Activated CD4-positive, alpha-beta T cell treated with anti-CD3 and anti-CD28 coated beads for 36 hours (primary cell): ENCODE measurements at regions of chr1 and their contacts with region 1.

Region 1: GRCh38 chr1:30911046-30911954 is 2.7 kb upstream of the SDC3 start:
- DNase-seq: peak; percentile 82
- ATAC-seq: peak; percentile 74
- H3K4me3 Mint-ChIP-seq: no peak overlapping the region
- H3K27ac Mint-ChIP-seq: no peak overlapping the region
- H3K4me1 Mint-ChIP-seq: peaks cover 13% of the 10 kb centered on the region
- H3K27me3 Mint-ChIP-seq: peaks cover 20% of the 10 kb centered on the region

Region 2: DNA sequence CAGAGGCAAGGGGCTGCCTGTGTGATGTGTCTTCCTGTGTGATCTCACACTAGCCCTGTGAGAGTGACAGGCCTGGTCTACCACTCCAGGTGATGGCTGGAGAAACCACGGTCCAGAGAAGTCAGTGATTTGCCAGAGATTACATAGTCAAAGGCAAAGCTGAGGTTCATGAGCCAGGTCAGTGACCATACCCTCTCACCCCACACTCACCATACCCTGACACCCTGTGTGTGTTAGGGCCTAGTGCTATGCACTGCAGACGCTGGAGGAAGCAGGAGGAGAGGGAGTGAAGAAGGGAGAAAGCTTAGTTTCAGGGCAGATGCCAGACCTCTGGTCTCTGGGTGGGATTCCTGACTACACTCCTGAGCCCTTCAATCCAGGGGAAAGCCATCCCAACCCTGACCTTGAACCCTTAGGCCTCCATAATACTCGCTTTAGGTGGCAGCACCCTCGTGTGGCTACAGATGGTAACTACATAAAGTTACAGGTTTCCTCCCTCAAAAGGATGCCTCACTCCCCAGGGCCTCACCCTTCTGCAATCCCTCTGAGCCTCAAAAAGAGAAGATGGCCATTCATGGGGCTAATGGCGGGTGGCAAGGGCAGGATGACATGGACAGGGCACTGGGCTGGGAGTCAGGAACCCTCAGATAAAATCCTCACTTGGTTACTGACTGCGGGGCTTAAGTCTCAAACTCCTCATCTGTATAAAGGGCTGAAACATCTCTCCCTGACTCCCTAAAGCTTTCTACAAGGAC is 18.0 kb after region 1 on chr1:
- CTCF ChIA-PET with region 1: interaction called, 14 read pairs
- POLR2A ChIA-PET with region 1: no interaction called
- intact Hi-C with region 1: no loop called
- DNase-seq: peak; percentile 75
- ATAC-seq: peak; percentile 82
- H3K4me3 Mint-ChIP-seq: no peak overlapping the region
- H3K27ac Mint-ChIP-seq: no peak overlapping the region
- H3K4me1 Mint-ChIP-seq: no peaks in the 10 kb centered on the region
- H3K27me3 Mint-ChIP-seq: no peaks in the 10 kb centered on the region

Region 3: DNA sequence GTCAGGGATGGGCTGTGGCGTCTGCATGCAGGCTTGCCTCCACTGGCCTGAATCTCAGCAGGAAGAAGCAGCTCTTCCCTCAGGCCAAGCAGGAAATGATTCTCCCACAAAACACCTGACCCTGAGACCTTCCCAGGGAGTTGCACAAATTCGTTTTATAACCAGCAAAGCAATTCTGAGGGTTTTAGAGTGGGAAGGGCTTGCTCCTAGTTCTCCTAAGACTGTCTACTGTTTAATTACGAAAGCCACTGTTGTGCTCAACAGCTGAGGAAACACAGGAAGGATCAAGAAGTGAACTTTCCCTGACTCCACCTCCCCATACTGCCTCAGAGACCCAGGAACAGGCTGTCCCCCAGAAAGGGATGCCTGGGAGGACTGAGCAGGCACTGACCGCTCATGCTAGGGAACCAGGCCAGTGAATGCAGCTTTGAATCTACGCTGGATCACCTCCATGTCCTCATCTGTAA is 191.2 kb after region 1 on chr1:
- CTCF ChIA-PET with region 1: no interaction called
- POLR2A ChIA-PET with region 1: no interaction called
- intact Hi-C with region 1: no loop called
- DNase-seq: no peak
- ATAC-seq: no peak
- H3K4me3 Mint-ChIP-seq: no peak overlapping the region
- H3K27ac Mint-ChIP-seq: no peak overlapping the region
- H3K4me1 Mint-ChIP-seq: no peaks in the 10 kb centered on the region
- H3K27me3 Mint-ChIP-seq: no peaks in the 10 kb centered on the region